Activated CD4-positive, alpha-beta memory T cell treated with anti-CD3 and anti-CD28 coated beads for 36 hours (primary cell): ENCODE measurements at regions of chr4 and their contacts with region 1.

Region 1: DNA sequence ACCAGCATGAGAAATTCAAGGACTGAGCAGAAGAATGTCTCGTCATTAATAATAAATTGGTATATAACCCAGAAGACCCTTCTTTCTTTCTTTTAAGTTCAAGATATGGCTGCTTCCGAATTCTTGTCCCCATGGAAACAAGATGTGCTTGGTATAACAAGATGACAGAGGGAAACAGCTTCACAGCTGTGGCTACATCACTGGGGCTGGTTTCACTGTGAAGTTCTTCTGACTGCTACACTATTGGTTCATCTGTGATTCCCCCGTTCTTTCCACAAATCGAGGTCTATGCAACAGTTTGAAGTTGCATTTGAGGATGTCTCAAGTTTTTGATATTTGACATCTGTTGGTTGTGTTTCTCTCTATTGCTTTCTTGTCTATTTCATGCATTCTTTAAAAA is 12.3 kb upstream of the DTHD1 start:
- DNase-seq: peak; percentile 56
- H3K4me3 Mint-ChIP-seq: no peak overlapping the region
- H3K27ac Mint-ChIP-seq: peak overlapping the region; percentile 53
- H3K4me1 Mint-ChIP-seq: peaks cover 48% of the 10 kb centered on the region
- H3K27me3 Mint-ChIP-seq: no peaks in the 10 kb centered on the region

Region 2: GRCh38 chr4:35793045-35793722 is 475.9 kb before region 1 on chr4:
- CTCF ChIA-PET with region 1: no interaction called
- POLR2A ChIA-PET with region 1: no interaction called
- intact Hi-C with region 1: no loop called
- DNase-seq: no peak
- H3K4me3 Mint-ChIP-seq: no peak overlapping the region
- H3K27ac Mint-ChIP-seq: no peak overlapping the region
- H3K4me1 Mint-ChIP-seq: no peaks in the 10 kb centered on the region
- H3K27me3 Mint-ChIP-seq: no peaks in the 10 kb centered on the region

Region 3: GRCh38 chr4:36255577-36255976 is 13.5 kb before region 1 on chr4:
- CTCF ChIA-PET with region 1: interaction called, 7 read pairs
- POLR2A ChIA-PET with region 1: interaction called, 6 read pairs
- intact Hi-C with region 1: loop called (anchors 1 kb)
- DNase-seq: peak; percentile 75
- H3K4me3 Mint-ChIP-seq: peak overlapping the region; percentile 65
- H3K27ac Mint-ChIP-seq: peak overlapping the region; percentile 95
- H3K4me1 Mint-ChIP-seq: peaks cover 44% of the 10 kb centered on the region
- H3K27me3 Mint-ChIP-seq: no peaks in the 10 kb centered on the region

Region 4: DNA sequence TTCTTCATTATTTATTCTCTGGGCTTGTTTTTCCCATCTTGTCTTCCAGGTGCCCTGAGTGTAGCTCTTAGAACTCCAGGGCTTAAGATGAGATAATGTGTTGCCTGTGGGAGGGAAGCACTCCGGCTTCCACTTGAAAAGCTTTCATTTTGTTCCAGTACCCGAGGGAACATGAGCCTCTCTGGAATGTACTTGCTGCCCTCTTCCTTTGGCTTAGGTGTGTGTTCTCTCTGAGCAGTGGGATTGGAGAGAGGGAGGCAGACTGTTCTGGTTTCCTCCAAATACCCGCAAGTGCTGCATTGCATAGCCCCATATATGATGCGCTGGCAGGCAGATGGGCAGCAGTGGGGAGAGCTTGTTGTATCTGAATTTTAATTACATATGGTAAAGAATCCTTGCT is 11.5 kb after region 1 on chr4:
- CTCF ChIA-PET with region 1: interaction called, 6 read pairs
- POLR2A ChIA-PET with region 1: interaction called, 6 read pairs
- intact Hi-C with region 1: loop called (anchors 1 kb)
- DNase-seq: no peak
- H3K4me3 Mint-ChIP-seq: no peak overlapping the region
- H3K27ac Mint-ChIP-seq: no peak overlapping the region
- H3K4me1 Mint-ChIP-seq: peaks cover 72% of the 10 kb centered on the region
- H3K27me3 Mint-ChIP-seq: no peaks in the 10 kb centered on the region

Region 5: GRCh38 chr4:36303426-36304137 is 34.5 kb after region 1 on chr4:
- CTCF ChIA-PET with region 1: no interaction called
- POLR2A ChIA-PET with region 1: no interaction called
- intact Hi-C with region 1: no loop called
- DNase-seq: peak; percentile 33
- H3K4me3 Mint-ChIP-seq: no peak overlapping the region
- H3K27ac Mint-ChIP-seq: no peak overlapping the region
- H3K4me1 Mint-ChIP-seq: peaks cover 16% of the 10 kb centered on the region
- H3K27me3 Mint-ChIP-seq: peaks cover 1% of the 10 kb centered on the region